Gastrocnemius medialis (tissue), 4 donors: ENCODE measurements at regions of chr1 and their contacts with region 1.

Region 1: GRCh38 chr1:225977937-225978748 is 21.0 kb downstream of the SDE2 start:
- DNase-seq: no peak
- ATAC-seq: no peak
- H3K4me3 ChIP-seq: no peak overlapping the region
- H3K27ac ChIP-seq: no peak overlapping the region
- H3K4me1 ChIP-seq: peaks cover 13 to 17% of the 10 kb centered on the region in 2 donors
- H3K27me3 ChIP-seq: no peaks in the 10 kb centered on the region
- CTCF ChIP-seq: no peak
- POLR2A ChIP-seq: no peak

Region 2: GRCh38 chr1:225318706-225319575 is 659.2 kb before region 1 on chr1:
- in situ Hi-C with region 1: no loop called
- intact Hi-C with region 1: loop called (anchors 10 kb)
- DNase-seq: no peak
- ATAC-seq: peak in 1 of 2 donors; percentile 53
- H3K4me3 ChIP-seq: no peak overlapping the region
- H3K27ac ChIP-seq: no peak overlapping the region
- H3K4me1 ChIP-seq: no peaks in the 10 kb centered on the region
- H3K27me3 ChIP-seq: no peaks in the 10 kb centered on the region
- CTCF ChIP-seq: peak in 3 of 5 experiments; percentile 13 to 65 (median 57)
- POLR2A ChIP-seq: no peak

Region 3: DNA sequence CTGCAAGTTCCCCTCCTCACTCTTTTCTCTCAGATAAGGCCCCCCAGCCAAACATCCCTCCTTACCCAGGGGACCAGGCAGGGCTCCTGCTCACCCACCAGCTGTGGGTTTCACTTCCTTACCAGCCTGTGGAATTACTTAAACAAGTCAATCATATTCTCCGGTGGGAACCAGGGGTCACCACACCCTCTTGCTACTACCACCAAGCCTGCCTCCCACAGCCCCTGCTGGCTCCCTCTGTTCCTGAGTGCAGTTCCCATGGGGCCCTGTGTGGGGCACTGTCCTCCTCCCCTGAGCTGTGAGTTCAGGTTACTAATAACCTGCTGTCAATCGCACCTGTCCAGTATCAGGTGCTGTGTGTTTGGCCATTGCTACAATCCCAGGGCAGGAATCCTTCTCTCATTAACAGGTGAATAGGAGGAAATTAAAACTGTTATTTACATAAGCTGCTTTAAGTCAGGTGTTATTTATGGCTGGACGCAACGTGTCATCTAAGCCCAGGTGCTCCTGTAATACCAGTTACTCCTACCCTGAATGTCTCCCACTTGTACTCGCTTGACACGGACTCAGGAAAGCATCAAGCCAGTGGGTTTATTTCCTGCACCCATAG is 497.2 kb before region 1 on chr1:
- in situ Hi-C with region 1: loop called (anchors 5 to 10 kb)
- intact Hi-C with region 1: no loop called
- DNase-seq: peak in 1 of 2 donors; percentile 42
- ATAC-seq: peak; percentile 48 to 71
- H3K4me3 ChIP-seq: no peak overlapping the region
- H3K27ac ChIP-seq: no peak overlapping the region
- H3K4me1 ChIP-seq: peaks cover 0 to 4% of the 10 kb centered on the region in 2 donors
- H3K27me3 ChIP-seq: no peaks in the 10 kb centered on the region
- CTCF ChIP-seq: peak; percentile 57 to 80 (median 63)
- POLR2A ChIP-seq: no peak

Region 4: DNA sequence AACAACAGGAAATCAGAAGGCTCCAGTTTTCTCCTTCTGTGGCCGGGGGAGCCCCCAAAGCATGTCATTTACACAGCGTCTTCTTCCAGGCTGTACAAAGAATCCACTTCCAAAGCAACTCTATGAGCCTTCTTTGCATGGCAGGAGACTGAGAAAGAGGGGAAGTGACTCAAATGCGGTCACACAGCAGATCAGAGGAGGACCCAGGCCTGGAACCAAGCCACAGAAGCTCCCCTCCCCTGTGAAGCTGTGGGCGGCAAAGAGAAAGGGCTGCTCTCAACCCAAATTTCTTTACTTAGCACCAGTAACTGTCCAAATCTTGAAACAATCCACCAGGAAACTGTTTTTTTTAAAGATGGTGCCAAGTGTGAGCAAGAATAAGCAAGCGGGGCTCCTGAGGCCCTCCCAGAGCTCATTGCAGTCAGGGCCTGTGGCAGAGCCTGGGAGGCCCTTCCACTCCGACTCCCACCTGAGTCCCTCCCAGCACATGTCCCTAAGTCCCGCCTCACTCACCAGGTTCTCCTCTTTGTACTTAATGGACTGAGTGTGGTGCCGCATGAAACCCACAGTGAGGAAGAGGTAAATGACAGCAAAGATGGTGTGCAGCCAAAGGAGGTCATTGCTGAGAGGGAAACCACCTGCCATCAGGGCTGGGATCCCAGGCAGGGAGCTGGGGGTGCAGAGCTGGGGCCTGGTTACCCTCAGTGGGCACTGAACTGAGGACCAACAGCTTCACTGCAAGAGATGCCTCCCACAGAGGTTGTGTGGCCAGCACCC is 111.9 kb before region 1 on chr1:
- in situ Hi-C with region 1: loop called in 1 of 4 experiments (anchors 10 kb)
- intact Hi-C with region 1: no loop called
- DNase-seq: no peak
- ATAC-seq: no peak
- H3K4me3 ChIP-seq: no peak overlapping the region
- H3K27ac ChIP-seq: no peak overlapping the region
- H3K4me1 ChIP-seq: no peaks in the 10 kb centered on the region
- H3K27me3 ChIP-seq: no peaks in the 10 kb centered on the region
- CTCF ChIP-seq: no peak
- POLR2A ChIP-seq: no peak